H1 (cell line): ENCODE measurements at regions of chr15 and their contacts with region 1.

Region 1: DNA sequence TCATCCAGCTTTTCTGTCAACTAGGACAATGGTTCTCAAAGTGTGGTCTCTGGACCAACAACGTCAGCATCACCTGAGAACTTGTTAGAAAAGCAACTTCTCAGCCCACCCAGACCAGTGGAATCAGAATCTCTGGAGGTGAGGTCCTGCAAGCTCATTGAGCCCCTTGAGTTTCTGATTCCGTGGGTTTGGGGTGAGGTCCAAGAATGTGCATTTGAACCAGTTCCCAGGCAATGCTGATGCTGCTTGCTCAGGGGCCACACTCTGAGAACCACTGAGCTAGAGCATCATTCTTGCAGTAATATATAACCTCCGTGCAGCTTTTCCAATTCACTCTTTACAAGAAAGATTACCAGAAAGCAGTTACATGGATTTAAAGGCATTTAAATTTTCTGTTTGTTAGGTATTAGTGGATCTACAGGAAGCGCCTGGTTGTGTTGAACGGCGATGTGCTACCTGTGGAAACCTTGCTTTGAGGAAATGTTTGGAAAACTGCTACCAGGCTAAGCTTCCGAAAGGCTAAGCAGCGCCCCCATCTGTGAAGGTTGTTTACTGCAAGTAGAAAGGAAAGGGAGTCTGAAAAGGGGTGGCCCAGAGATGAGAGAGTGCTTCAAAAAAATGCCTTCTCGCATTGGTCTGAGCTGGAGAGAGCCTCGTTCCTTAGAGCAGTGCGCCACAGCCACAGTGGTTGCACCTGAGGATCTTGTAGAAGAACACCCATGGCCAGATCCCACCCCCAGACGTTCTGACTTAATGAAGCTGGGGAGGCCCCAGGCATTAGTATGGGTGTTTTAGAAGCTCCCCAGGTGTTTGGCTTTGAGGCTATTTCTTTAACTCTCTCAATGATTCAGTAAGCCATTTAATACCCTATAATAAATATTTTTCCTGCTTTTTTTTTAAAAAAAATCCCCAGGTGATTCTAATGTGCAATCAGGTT is 50.0 kb downstream of the RLBP1 start:
- DNase-seq: peak; percentile 44 to 93
- H3K4me3 ChIP-seq: no peak overlapping the region
- H3K27ac ChIP-seq: no peak overlapping the region
- H3K4me1 ChIP-seq: peaks cover 0 to 5% (median 1%) of the 10 kb centered on the region in 4 experiments; a peak in 2 of 7 replicates
- H3K27me3 ChIP-seq: no peaks in the 10 kb centered on the region
- CTCF ChIP-seq: peak; percentile 32 to 87 (median 84)
- EP300 ChIP-seq: no peak
- POLR2A ChIP-seq: no peak
- RAD21 ChIP-seq: peak; percentile 79 to 87

Region 2: GRCh38 chr15:88878720-88879184 is 292.7 kb before region 1 on chr15:
- CTCF ChIA-PET with region 1: interaction called, 18 read pairs
- POLR2A ChIA-PET with region 1: no interaction called
- DNase-seq: peak in 1 of 2 experiments; percentile 89
- H3K4me3 ChIP-seq: no peak overlapping the region
- H3K27ac ChIP-seq: no peak overlapping the region
- H3K4me1 ChIP-seq: peaks cover 0 to 6% (median under 1%) of the 10 kb centered on the region in 4 experiments; a peak in 3 of 7 replicates
- H3K27me3 ChIP-seq: no peaks in the 10 kb centered on the region
- CTCF ChIP-seq: peak; percentile 89 to 96 (median 95)
- EP300 ChIP-seq: no peak
- POLR2A ChIP-seq: no peak
- RAD21 ChIP-seq: peak; percentile 80 to 87

Region 3: GRCh38 chr15:89101302-89102191 is 69.9 kb before region 1 on chr15:
- CTCF ChIA-PET with region 1: interaction called, 12 read pairs
- POLR2A ChIA-PET with region 1: no interaction called
- DNase-seq: no peak
- H3K4me3 ChIP-seq: no peak overlapping the region
- H3K27ac ChIP-seq: no peak overlapping the region
- H3K4me1 ChIP-seq: no peaks in the 10 kb centered on the region
- H3K27me3 ChIP-seq: no peaks in the 10 kb centered on the region
- CTCF ChIP-seq: no peak
- EP300 ChIP-seq: no peak
- POLR2A ChIP-seq: no peak
- RAD21 ChIP-seq: no peak

Region 4: DNA sequence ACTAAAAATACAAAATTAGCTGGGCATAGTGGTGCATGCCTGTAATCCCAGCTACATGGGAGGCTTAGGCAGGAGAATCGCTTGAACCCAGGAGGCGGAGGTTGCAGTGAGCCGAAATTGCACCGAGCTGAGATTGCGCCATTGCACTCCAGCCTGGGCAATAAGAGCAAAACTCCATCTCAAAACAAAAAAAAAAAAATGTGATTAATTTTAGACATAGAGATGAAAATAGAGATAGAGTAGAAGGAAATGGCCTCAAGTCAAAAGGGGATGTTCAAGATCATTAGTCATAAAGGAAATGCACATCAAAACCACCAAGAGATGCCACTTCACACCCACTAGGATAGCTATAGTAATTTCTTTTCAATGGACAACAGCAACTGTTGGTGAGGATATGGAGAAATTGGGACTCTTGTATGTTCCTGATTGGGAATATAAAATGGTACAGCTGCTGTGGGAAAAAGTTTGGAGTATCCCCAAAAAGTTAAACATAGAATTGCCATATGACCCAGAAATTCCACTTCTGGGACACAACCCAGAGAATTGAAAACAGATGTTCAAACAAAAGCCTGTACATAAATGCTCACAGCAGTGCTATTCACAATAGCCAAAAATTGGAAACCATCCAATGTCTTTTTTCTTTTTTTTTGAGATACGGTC is 27.8 kb before region 1 on chr15:
- CTCF ChIA-PET with region 1: interaction called, 41 read pairs
- POLR2A ChIA-PET with region 1: no interaction called
- DNase-seq: no peak
- H3K4me3 ChIP-seq: no peak overlapping the region
- H3K27ac ChIP-seq: no peak overlapping the region
- H3K4me1 ChIP-seq: no peaks in the 10 kb centered on the region; a peak in 1 of 7 replicates
- H3K27me3 ChIP-seq: no peaks in the 10 kb centered on the region
- CTCF ChIP-seq: no peak
- EP300 ChIP-seq: no peak
- POLR2A ChIP-seq: no peak
- RAD21 ChIP-seq: no peak

Region 5: GRCh38 chr15:89157918-89158564 is 13.4 kb before region 1 on chr15:
- CTCF ChIA-PET with region 1: interaction called, 60 read pairs
- POLR2A ChIA-PET with region 1: no interaction called
- DNase-seq: no peak
- H3K4me3 ChIP-seq: no peak overlapping the region
- H3K27ac ChIP-seq: no peak overlapping the region
- H3K4me1 ChIP-seq: no peaks in the 10 kb centered on the region
- H3K27me3 ChIP-seq: no peaks in the 10 kb centered on the region
- CTCF ChIP-seq: no peak
- EP300 ChIP-seq: no peak
- POLR2A ChIP-seq: no peak
- RAD21 ChIP-seq: no peak

Region 6: DNA sequence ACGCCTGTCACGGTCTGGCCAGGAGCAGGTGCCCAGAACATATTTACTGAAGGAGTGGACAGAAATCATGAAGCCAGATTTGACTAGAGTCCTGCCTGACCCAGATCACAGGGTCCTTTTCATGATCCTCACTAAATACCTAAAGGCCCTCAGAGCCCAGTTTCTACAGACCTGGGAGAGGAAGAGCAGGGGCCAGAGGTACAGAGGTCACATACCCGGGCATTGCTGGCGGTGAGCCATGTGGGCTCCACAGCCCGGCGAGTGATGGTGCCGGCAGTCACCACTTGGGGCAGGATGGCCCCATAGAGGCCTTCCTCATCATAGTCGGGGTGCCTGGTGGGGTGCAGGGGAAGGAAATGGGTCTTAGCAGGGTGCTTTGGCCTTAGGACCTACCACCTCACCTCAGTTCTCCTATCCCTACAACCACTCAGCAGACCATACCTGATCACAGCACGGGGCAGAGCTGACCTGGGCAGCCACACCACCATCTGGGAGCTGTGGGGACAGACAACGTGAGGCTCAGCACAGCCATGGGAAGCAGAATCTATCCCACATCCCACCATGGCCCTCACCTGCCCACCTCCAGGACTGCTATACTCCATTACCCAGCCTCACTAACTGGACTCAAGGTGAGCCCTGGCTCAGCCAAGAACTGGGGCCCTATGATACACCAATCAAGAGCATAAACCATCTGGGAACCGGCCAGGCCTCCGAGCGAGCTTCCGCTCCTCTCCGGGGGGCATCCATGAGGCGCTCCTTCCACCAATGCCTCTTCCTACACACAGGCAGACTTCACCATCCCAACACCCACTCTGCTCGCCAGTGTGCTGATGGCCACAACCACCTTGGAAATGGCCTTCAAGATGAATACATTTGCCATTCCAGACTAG is 150.4 kb after region 1 on chr15:
- CTCF ChIA-PET with region 1: no interaction called
- POLR2A ChIA-PET with region 1: no interaction called
- DNase-seq: no peak
- H3K4me3 ChIP-seq: no peak overlapping the region
- H3K27ac ChIP-seq: no peak overlapping the region
- H3K4me1 ChIP-seq: no peaks in the 10 kb centered on the region
- H3K27me3 ChIP-seq: no peaks in the 10 kb centered on the region
- CTCF ChIP-seq: peak in 2 of 3 experiments; percentile 26 to 44; a peak in 3 of 4 replicates
- EP300 ChIP-seq: no peak
- POLR2A ChIP-seq: no peak
- RAD21 ChIP-seq: peak in 1 of 2 experiments; percentile 23; a peak in 1 of 4 replicates